ENCODE measurements at regions of chr17 and their contacts with region 1.

Region 1: DNA sequence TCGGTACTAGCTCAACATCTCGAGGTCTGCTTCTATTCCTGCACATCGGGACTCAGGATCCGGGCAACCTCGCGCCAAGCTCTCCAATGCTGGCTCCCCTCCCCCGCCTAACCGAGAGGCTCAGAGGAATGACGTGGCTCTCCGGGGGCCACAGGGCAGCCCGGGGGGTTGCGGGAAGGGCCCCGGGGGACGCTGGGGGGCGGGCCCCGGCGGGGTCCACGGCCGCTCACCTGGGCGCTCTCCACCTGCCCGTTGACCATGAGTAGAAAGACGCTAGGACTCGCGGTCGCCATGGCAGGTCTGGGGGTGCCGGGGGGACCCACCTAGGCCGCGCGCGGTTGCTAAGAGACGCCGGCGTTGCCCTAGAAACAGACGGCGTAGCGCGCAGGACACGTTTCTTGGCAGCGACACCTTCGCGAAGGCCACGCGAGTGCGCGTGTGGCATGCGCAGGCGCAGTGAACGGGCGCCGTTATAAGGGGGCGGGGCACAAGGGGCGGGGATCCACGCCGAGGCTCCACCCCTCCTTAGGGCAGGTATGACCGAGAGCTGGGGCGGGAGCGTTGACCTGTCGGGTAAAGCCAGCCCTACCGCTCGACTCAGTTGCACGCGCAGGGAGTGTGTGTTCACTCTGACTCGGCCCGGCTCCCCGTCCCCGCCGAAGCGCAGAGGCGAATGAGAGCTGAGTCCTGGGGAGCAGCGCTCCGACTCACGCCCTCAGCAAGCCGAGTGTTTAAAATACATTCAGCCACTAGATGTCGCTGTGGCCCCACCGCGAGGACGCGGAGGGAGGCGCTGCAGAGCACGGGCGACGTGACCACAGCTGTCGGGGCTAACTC is at the start of gene B9D1:
- DNase-seq: peak; percentile 96
- H3K4me3 Mint-ChIP-seq: peak within 1 kb of the TSS; percentile 86
- H3K27ac Mint-ChIP-seq: peak within 1 kb of the TSS; percentile 74
- H3K4me1 Mint-ChIP-seq: peaks cover 8% of the 10 kb centered on the region
- H3K27me3 Mint-ChIP-seq: peaks cover 4% of the 10 kb centered on the region
- total RNA-seq, gene B9D1: 7.2 to 7.6 TPM

Region 2: DNA sequence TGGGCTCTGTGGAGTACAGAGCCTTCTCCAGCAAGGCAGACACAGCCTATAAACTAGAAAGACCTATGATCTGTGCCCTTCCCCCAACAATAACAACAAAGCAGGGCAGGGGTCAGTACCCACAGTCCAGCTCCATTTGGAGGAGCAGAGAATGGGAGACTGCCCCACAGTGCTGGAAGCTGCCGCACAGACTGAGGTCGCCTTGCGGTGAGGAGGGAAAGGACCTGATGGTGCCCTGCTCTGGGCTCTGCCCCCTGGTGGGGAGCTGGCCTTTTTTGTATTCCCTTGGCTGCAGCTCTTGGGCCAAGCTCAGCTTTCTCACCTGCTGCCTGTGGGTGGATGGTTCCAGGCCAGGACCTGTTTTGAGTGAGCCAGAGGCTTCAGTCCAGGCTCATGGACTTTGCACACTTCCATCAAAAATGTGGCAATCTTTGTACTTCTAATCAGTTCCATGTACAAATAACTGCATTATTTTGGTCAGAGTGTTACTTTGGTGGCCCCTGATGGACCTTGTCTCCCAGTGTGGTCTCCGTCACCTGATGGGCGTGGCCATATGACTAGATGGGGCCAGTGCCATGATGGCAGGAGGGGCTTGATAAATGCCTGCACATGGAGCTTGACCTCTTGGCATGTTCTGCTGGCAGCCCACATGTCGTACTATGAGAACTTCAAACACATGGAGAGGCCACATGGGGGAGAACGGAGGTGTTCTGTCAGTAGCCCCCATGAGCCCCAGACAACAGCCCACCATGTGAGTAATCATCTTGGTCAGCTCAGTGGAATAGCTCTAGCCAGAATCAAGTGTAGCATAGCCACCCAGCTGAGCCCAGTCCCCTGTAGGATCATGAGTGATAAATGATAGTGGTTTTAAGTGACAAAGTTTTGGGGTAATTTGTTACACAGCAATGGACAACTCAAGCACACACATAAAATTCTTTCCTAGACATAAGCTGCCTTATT is 24.2 kb before region 1 on chr17:
- CTCF ChIA-PET with region 1: interaction called, 12 read pairs
- POLR2A ChIA-PET with region 1: interaction called, 3 read pairs
- intact Hi-C with region 1: no loop called
- DNase-seq: peak; percentile 77
- H3K4me3 Mint-ChIP-seq: no peak overlapping the region
- H3K27ac Mint-ChIP-seq: no peak overlapping the region
- H3K4me1 Mint-ChIP-seq: no peaks in the 10 kb centered on the region
- H3K27me3 Mint-ChIP-seq: peaks cover 11% of the 10 kb centered on the region

Region 3: GRCh38 chr17:19447085-19447583 is 84.6 kb after region 1 on chr17:
- CTCF ChIA-PET with region 1: interaction called, 164 read pairs
- POLR2A ChIA-PET with region 1: interaction called, 4 read pairs
- intact Hi-C with region 1: loop called (anchors 1 kb)
- DNase-seq: peak; percentile 58
- H3K4me3 Mint-ChIP-seq: no peak overlapping the region
- H3K27ac Mint-ChIP-seq: peak overlapping the region; percentile 4
- H3K4me1 Mint-ChIP-seq: peaks cover 3% of the 10 kb centered on the region
- H3K27me3 Mint-ChIP-seq: peaks cover 12% of the 10 kb centered on the region

Region 4: GRCh38 chr17:19460700-19461099 is 98.2 kb after region 1 on chr17:
- CTCF ChIA-PET with region 1: interaction called, 18 read pairs
- POLR2A ChIA-PET with region 1: no interaction called
- intact Hi-C with region 1: no loop called
- DNase-seq: no peak
- H3K4me3 Mint-ChIP-seq: no peak overlapping the region
- H3K27ac Mint-ChIP-seq: no peak overlapping the region
- H3K4me1 Mint-ChIP-seq: peaks cover 43% of the 10 kb centered on the region
- H3K27me3 Mint-ChIP-seq: peaks cover 1% of the 10 kb centered on the region

Region 5: DNA sequence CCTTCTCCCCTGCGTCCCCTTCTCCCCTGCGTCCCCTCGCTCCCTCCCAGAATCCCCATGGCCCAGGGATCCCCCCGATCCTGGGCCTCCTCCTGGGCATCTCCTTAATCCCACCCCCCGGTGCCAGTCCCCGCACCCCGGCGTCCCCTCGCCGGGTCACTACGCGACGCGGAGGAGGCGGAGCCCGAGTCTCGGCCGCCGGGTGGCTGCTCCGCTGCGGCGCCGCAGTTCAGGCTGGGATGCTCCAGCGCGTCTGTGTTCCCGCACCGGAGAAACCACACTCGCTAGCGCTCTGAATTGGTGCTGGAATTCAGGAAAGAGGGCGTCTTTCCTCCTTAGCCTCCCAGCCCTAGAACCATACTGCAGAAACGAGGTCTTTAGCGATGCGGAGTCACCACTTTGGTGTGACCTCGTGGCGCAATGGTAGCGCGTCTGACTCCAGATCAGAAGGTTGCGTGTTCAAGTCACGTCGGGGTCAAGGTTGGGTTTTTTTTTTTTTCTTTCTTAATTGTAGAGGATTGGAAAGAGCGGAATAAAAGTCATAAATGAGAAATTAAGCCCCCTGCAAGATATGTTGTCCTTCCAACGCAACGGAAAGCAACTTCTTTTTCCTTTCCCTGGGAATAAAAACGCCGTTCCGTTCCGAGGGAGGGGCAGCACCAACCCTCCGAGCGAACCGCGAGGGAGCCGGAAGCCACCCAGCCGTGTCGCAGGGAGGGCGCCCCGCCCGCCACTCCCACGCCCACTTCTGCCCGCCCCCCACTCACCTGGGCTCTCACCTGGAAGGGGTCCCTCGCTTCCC is 145.5 kb after region 1 on chr17:
- CTCF ChIA-PET with region 1: interaction called, 6 read pairs
- POLR2A ChIA-PET with region 1: no interaction called
- intact Hi-C with region 1: loop called (anchors 5 kb)
- DNase-seq: peak; percentile 90
- H3K4me3 Mint-ChIP-seq: peak overlapping the region; percentile 84
- H3K27ac Mint-ChIP-seq: peak overlapping the region; percentile 90
- H3K4me1 Mint-ChIP-seq: peaks cover 8% of the 10 kb centered on the region
- H3K27me3 Mint-ChIP-seq: peaks cover 3% of the 10 kb centered on the region

Region 6: GRCh38 chr17:19766422-19767270 is 404.2 kb after region 1 on chr17:
- CTCF ChIA-PET with region 1: interaction called, 22 read pairs
- POLR2A ChIA-PET with region 1: interaction called, 3 read pairs
- intact Hi-C with region 1: loop called (anchors 5 kb)
- DNase-seq: peak; percentile 86
- H3K4me3 Mint-ChIP-seq: no peak overlapping the region
- H3K27ac Mint-ChIP-seq: peak overlapping the region; percentile 5
- H3K4me1 Mint-ChIP-seq: peaks cover 46% of the 10 kb centered on the region
- H3K27me3 Mint-ChIP-seq: no peaks in the 10 kb centered on the region